A673 (cell line): ENCODE measurements at regions of chr6 and their contacts with region 1.

Region 1: GRCh38 chr6:111873178-111874024 is at the start of gene FYN:
- DNase-seq: peak; percentile 98
- H3K4me3 ChIP-seq: peak within 1 kb of the TSS; percentile 68
- H3K27ac ChIP-seq: no peak within 1 kb of the TSS
- H3K4me1 ChIP-seq: peaks cover 15% of the 10 kb centered on the region
- H3K27me3 ChIP-seq: peaks cover 11% of the 10 kb centered on the region
- CTCF ChIP-seq: peak; percentile 39
- total RNA-seq, gene FYN: 34.3 and 46.7 TPM in 2 replicates

Region 2: GRCh38 chr6:111361648-111362047 is 511.8 kb before region 1 on chr6:
- CTCF ChIA-PET with region 1: no interaction called
- POLR2A ChIA-PET with region 1: no interaction called
- intact Hi-C with region 1: no loop called
- DNase-seq: peak; percentile 67
- H3K4me3 ChIP-seq: no peak overlapping the region
- H3K27ac ChIP-seq: no peak overlapping the region
- H3K4me1 ChIP-seq: no peaks in the 10 kb centered on the region
- H3K27me3 ChIP-seq: no peaks in the 10 kb centered on the region
- CTCF ChIP-seq: peak; percentile 61

Region 3: GRCh38 chr6:111552241-111552744 is 321.1 kb before region 1 on chr6:
- CTCF ChIA-PET with region 1: no interaction called
- POLR2A ChIA-PET with region 1: no interaction called
- intact Hi-C with region 1: no loop called
- DNase-seq: peak; percentile 87
- H3K4me3 ChIP-seq: no peak overlapping the region
- H3K27ac ChIP-seq: peak overlapping the region; percentile 69
- H3K4me1 ChIP-seq: peaks cover 49% of the 10 kb centered on the region
- H3K27me3 ChIP-seq: no peaks in the 10 kb centered on the region
- CTCF ChIP-seq: no peak

Region 4: DNA sequence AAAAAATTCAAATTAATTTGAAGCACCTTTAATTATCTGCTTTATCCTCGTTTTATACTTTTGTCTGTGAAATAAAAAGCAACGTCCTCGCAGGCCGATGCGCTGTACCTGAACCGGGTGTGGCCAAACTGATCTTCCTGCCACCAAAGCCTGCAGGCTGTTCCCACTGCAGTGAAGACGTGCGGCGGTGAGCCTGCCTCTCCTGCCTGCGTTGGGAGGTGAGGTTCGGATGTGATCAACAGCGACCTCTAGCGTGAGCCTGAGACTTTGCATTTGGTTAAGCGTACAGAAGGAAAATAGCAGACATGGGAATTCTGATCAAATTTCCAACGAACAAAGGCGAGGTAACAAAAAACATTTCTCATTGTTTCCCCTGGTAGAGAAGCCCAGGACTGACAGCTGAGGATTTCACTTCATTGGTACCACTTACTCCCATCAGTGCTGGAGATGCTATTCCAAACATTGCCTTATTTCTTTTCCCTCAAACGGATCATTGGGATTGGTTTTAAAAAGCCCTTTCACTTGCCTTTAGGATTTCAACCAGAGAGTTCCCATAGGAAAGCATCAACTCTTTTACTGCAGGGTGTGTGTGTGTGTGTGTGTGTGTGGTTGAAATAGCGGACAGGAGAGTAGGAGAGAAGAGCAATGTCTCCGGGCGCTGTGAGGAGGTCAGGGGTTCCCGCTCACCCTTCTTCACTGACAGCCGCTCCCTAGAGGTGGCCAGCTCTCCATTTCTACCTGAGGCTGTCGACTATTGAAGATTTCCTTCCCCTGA is 123.9 kb after region 1 on chr6:
- CTCF ChIA-PET with region 1: no interaction called
- POLR2A ChIA-PET with region 1: no interaction called
- intact Hi-C with region 1: loop called (anchors 5 kb)
- DNase-seq: peak; percentile 83
- H3K4me3 ChIP-seq: no peak overlapping the region
- H3K27ac ChIP-seq: no peak overlapping the region
- H3K4me1 ChIP-seq: peaks cover 9% of the 10 kb centered on the region
- H3K27me3 ChIP-seq: no peaks in the 10 kb centered on the region
- CTCF ChIP-seq: peak; percentile 91

Region 5: DNA sequence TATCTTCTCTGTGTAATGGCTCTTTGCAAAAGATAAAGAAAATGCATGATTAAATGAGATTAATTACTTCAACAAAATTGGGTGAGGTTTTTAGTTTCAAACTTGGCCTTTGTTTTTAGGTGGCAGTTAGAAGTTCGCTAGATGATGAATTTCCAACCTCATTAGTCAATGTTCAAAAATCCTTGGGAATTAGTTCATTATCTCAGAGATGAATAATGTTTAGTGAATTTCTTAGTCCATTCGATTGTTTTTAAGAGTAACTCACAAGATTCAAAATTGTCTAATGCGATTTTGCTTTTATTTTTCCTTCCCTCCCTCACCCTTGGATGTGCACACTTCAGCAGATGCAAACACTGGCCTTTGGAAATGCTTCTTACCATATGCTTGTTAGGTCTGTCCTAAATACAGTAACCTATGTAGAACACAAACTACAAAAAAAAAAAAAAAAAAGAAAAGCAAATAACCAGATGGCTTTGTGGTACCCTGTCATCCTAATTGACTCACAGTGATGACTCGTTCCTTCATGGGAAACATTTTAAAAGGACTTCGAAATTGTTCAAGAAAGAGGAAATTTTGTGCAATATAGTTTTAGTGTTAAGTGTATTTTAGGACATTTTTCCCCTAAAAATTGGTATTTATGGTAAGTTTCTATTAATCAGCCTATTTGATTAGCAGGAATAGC is 280.7 kb after region 1 on chr6:
- CTCF ChIA-PET with region 1: no interaction called
- POLR2A ChIA-PET with region 1: no interaction called
- intact Hi-C with region 1: loop called (anchors 10 kb)
- DNase-seq: peak; percentile 40
- H3K4me3 ChIP-seq: no peak overlapping the region
- H3K27ac ChIP-seq: no peak overlapping the region
- H3K4me1 ChIP-seq: peaks cover 9% of the 10 kb centered on the region
- H3K27me3 ChIP-seq: no peaks in the 10 kb centered on the region
- CTCF ChIP-seq: no peak

Region 6: GRCh38 chr6:112396221-112396620 is 522.8 kb after region 1 on chr6:
- CTCF ChIA-PET with region 1: no interaction called
- POLR2A ChIA-PET with region 1: no interaction called
- intact Hi-C with region 1: no loop called
- DNase-seq: no peak
- H3K4me3 ChIP-seq: no peak overlapping the region
- H3K27ac ChIP-seq: no peak overlapping the region
- H3K4me1 ChIP-seq: no peaks in the 10 kb centered on the region
- H3K27me3 ChIP-seq: no peaks in the 10 kb centered on the region
- CTCF ChIP-seq: no peak